CD4-positive, alpha-beta memory T cell (primary cell): ENCODE measurements at regions of chr10 and their contacts with region 1.

Region 1: GRCh38 chr10:6163364-6164270 is 39.1 kb upstream of the PFKFB3 start:
- DNase-seq: peak; percentile 90 to 94 (median 91)
- H3K4me3 ChIP-seq: peak overlapping the region; percentile 77 to 84
- H3K4me3 Mint-ChIP-seq: peak overlapping the region; percentile 77 to 95 (median 92)
- H3K27ac ChIP-seq: peak overlapping the region; percentile 89
- H3K27ac Mint-ChIP-seq: peak overlapping the region; percentile 92 to 98 (median 97)
- H3K4me1 ChIP-seq: peaks cover 55% of the 10 kb centered on the region
- H3K4me1 Mint-ChIP-seq: peaks cover 28 to 64% (median 46%) of the 10 kb centered on the region in 4 donors
- H3K27me3 ChIP-seq: no peaks in the 10 kb centered on the region
- H3K27me3 Mint-ChIP-seq: no peaks in the 10 kb centered on the region

Region 2: GRCh38 chr10:5996696-5997095 is 166.9 kb before region 1 on chr10:
- CTCF ChIA-PET with region 1: no interaction called
- POLR2A ChIA-PET with region 1: no interaction called
- intact Hi-C with region 1: no loop called
- DNase-seq: no peak
- H3K4me3 ChIP-seq: no peak overlapping the region
- H3K4me3 Mint-ChIP-seq: no peak overlapping the region
- H3K27ac ChIP-seq: no peak overlapping the region
- H3K27ac Mint-ChIP-seq: no peak overlapping the region
- H3K4me1 ChIP-seq: peaks cover 6% of the 10 kb centered on the region
- H3K4me1 Mint-ChIP-seq: peaks cover 6 to 14% (median 13%) of the 10 kb centered on the region in 4 donors
- H3K27me3 ChIP-seq: no peaks in the 10 kb centered on the region
- H3K27me3 Mint-ChIP-seq: no peaks in the 10 kb centered on the region

Region 3: DNA sequence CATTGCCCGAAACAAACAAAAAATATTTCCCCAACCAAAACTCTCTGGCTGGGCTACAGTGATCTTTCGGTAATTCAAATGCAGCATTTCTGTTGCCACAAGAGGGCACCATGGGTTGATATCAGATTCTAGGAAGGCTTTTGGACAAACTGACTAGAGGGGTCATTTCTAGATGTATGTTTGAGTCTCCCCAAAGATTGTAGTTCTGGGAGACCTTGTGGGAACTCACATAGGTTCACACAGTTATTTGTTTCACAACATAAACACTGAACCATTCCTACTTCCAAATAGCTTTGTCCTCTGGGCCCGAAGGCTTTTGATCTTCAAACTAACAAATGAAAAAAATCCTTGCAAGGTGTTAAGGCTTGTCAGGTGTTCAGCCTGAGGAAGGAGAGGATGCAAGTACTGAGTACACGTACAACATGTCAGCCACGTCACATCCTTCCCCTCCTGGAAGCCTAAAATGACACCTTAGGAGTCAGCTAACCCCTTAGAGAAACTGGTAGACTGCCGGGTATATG is 149.3 kb before region 1 on chr10:
- CTCF ChIA-PET with region 1: no interaction called
- POLR2A ChIA-PET with region 1: no interaction called
- intact Hi-C with region 1: loop called (anchors 5 kb)
- DNase-seq: peak; percentile 76 to 92 (median 83)
- H3K4me3 ChIP-seq: no peak overlapping the region
- H3K4me3 Mint-ChIP-seq: peak overlapping the region in 6 of 8 donors; percentile 26 to 82 (median 40)
- H3K27ac ChIP-seq: peak overlapping the region; percentile 70
- H3K27ac Mint-ChIP-seq: peak overlapping the region; percentile 92 to 99 (median 97)
- H3K4me1 ChIP-seq: peaks cover 23% of the 10 kb centered on the region
- H3K4me1 Mint-ChIP-seq: peaks cover 16 to 41% (median 20%) of the 10 kb centered on the region in 4 donors
- H3K27me3 ChIP-seq: no peaks in the 10 kb centered on the region
- H3K27me3 Mint-ChIP-seq: no peaks in the 10 kb centered on the region

Region 4: GRCh38 chr10:6136215-6137201 is 27.1 kb before region 1 on chr10:
- CTCF ChIA-PET with region 1: no interaction called
- POLR2A ChIA-PET with region 1: interaction called, 14 read pairs
- intact Hi-C with region 1: no loop called
- DNase-seq: peak in 1 of 5 donors; percentile 61
- H3K4me3 ChIP-seq: no peak overlapping the region
- H3K4me3 Mint-ChIP-seq: peak overlapping the region in 7 of 8 donors; percentile 36 to 79 (median 63)
- H3K27ac ChIP-seq: peak overlapping the region; percentile 27
- H3K27ac Mint-ChIP-seq: peak overlapping the region; percentile 59 to 95 (median 89)
- H3K4me1 ChIP-seq: peaks cover 53% of the 10 kb centered on the region
- H3K4me1 Mint-ChIP-seq: peaks cover 43 to 64% (median 56%) of the 10 kb centered on the region in 4 donors
- H3K27me3 ChIP-seq: no peaks in the 10 kb centered on the region
- H3K27me3 Mint-ChIP-seq: no peaks in the 10 kb centered on the region

Region 5: GRCh38 chr10:6144406-6145165 is 19.0 kb before region 1 on chr10:
- CTCF ChIA-PET with region 1: interaction called, 3 read pairs
- POLR2A ChIA-PET with region 1: interaction called, 26 read pairs
- intact Hi-C with region 1: loop called (anchors 1 kb)
- DNase-seq: peak; percentile 85 to 92 (median 87)
- H3K4me3 ChIP-seq: peak overlapping the region; percentile 61 to 85
- H3K4me3 Mint-ChIP-seq: peak overlapping the region; percentile 88 to 95 (median 91)
- H3K27ac ChIP-seq: peak overlapping the region; percentile 84
- H3K27ac Mint-ChIP-seq: peak overlapping the region; percentile 89 to 97 (median 92)
- H3K4me1 ChIP-seq: peaks cover 77% of the 10 kb centered on the region
- H3K4me1 Mint-ChIP-seq: peaks cover 45 to 85% (median 64%) of the 10 kb centered on the region in 4 donors
- H3K27me3 ChIP-seq: no peaks in the 10 kb centered on the region
- H3K27me3 Mint-ChIP-seq: no peaks in the 10 kb centered on the region

Region 6: GRCh38 chr10:6151087-6151977 is 12.3 kb before region 1 on chr10:
- CTCF ChIA-PET with region 1: interaction called, 13 read pairs
- POLR2A ChIA-PET with region 1: interaction called, 22 read pairs
- intact Hi-C with region 1: no loop called
- DNase-seq: peak in 4 of 5 donors; percentile 46 to 64 (median 56)
- H3K4me3 ChIP-seq: no peak overlapping the region
- H3K4me3 Mint-ChIP-seq: peak overlapping the region in 7 of 8 donors; percentile 36 to 75 (median 58)
- H3K27ac ChIP-seq: peak overlapping the region; percentile 1
- H3K27ac Mint-ChIP-seq: peak overlapping the region; percentile 86 to 93 (median 91)
- H3K4me1 ChIP-seq: peaks cover 47% of the 10 kb centered on the region
- H3K4me1 Mint-ChIP-seq: peaks cover 36 to 81% (median 49%) of the 10 kb centered on the region in 4 donors
- H3K27me3 ChIP-seq: no peaks in the 10 kb centered on the region
- H3K27me3 Mint-ChIP-seq: no peaks in the 10 kb centered on the region

Region 7: DNA sequence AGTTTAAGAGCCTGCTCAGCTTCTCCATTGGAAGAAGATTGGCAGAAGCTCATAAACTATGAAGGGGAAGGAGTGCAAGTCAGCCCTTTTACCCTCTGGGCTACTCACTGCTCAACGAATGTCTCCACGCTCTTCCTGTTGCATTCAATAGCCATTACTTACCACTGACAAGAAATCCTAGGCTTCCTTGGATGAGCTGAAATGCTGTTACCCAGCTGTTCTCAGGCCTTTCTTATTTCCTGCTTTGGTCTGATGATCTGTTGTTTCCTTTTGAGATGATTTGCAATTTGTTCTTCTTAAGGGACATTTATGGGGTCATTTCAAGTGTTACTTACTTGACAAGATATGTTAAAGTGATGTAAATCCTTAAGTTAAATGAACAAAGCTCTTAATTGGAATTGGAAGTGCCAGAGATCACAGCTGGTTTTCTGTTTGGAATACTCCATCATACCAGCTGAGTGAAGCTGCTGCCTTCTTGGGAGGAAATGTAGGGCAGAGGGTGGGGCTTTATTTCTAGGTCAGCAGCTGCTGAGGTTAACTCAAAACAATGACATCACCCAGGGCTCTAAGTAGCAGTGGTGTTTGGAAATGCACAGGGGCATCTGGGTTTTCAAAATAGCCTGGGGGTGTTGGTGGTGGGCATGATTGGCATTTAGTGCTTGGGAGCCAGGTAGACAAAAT is 246.5 kb after region 1 on chr10:
- CTCF ChIA-PET with region 1: interaction called, 5 read pairs
- POLR2A ChIA-PET with region 1: interaction called, 16 read pairs
- intact Hi-C with region 1: no loop called
- DNase-seq: peak; percentile 71 to 84 (median 79)
- H3K4me3 ChIP-seq: peak overlapping the region; percentile 11 to 34
- H3K4me3 Mint-ChIP-seq: peak overlapping the region; percentile 76 to 93 (median 81)
- H3K27ac ChIP-seq: peak overlapping the region; percentile 78
- H3K27ac Mint-ChIP-seq: peak overlapping the region; percentile 93 to 99 (median 98)
- H3K4me1 ChIP-seq: peaks cover 50% of the 10 kb centered on the region
- H3K4me1 Mint-ChIP-seq: peaks cover 31 to 66% (median 44%) of the 10 kb centered on the region in 4 donors
- H3K27me3 ChIP-seq: no peaks in the 10 kb centered on the region
- H3K27me3 Mint-ChIP-seq: no peaks in the 10 kb centered on the region

Region 8: DNA sequence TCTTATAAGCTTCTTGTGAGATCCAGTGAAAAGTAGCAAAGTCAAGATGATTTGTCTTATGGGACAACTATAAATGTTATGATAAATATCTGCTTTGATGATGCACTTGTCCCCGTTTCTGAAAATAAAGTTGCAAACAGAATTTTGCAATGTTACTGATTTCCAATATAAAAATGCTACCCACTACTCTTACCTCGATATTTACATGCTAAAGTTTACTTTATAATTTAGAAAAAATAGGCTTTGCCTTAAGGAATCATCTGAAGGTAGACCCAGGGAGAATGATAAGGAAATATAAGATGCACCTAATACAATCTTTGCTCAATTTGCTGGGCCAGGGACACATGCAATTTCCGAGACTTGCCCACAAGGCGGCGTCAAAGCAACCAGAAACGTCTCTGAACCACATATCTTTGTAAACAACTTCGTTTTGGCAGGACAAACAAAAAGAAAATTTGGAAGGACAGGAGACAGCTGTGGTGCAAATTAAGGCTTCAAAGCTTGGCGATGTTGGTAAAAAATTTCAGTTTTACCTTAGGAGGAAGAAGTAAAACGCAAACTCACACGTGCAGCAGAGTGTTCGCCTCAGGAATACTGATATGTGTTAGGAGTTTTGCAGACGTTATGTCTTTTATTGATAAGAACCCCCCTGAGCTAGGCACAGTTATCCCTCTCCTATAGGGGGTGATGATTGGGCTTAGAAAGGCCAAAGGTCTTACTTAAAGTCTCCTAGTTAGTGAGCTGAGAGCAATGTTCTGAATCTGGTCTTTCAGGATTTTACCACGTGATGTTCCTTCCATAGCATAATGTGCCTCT is 282.1 kb after region 1 on chr10:
- CTCF ChIA-PET with region 1: no interaction called
- POLR2A ChIA-PET with region 1: no interaction called
- intact Hi-C with region 1: no loop called
- DNase-seq: peak; percentile 41 to 50 (median 46)
- H3K4me3 ChIP-seq: no peak overlapping the region
- H3K4me3 Mint-ChIP-seq: peak overlapping the region in 2 of 8 donors; percentile 3 to 41
- H3K27ac ChIP-seq: no peak overlapping the region
- H3K27ac Mint-ChIP-seq: peak overlapping the region in 6 of 7 donors; percentile 24 to 73 (median 58)
- H3K4me1 ChIP-seq: peaks cover 5% of the 10 kb centered on the region
- H3K4me1 Mint-ChIP-seq: peaks cover 18 to 44% (median 30%) of the 10 kb centered on the region in 4 donors
- H3K27me3 ChIP-seq: no peaks in the 10 kb centered on the region
- H3K27me3 Mint-ChIP-seq: no peaks in the 10 kb centered on the region